H1 (cell line): ENCODE measurements at regions of chr2 and their contacts with region 1.

Region 1: GRCh38 chr2:112884869-112885505 is 26.0 kb upstream of the IL37 start:
- DNase-seq: peak; percentile 46 to 96
- H3K4me3 ChIP-seq: no peak overlapping the region
- H3K27ac ChIP-seq: no peak overlapping the region
- H3K4me1 ChIP-seq: 0 out of 7 replicates have a peak, but pooled peaks cover 0 to 2% (median 0%) of the 10 kb centered on the region in 4 experiments
- H3K27me3 ChIP-seq: no peaks in the 10 kb centered on the region
- CTCF ChIP-seq: peak; percentile 70 to 88 (median 83)
- EP300 ChIP-seq: no peak
- POLR2A ChIP-seq: no peak
- RAD21 ChIP-seq: peak; percentile 94 to 96

Region 2: GRCh38 chr2:112749755-112750559 is 135.0 kb before region 1 on chr2:
- CTCF ChIA-PET with region 1: interaction called, 178 read pairs
- POLR2A ChIA-PET with region 1: interaction called, 5 read pairs
- DNase-seq: peak in 1 of 2 experiments; percentile 86
- H3K4me3 ChIP-seq: no peak overlapping the region
- H3K27ac ChIP-seq: peak overlapping the region; percentile 21; the same call in 1 of the 2 replicates
- H3K4me1 ChIP-seq: no peaks in the 10 kb centered on the region
- H3K27me3 ChIP-seq: no peaks in the 10 kb centered on the region
- CTCF ChIP-seq: peak; percentile 91 to 95 (median 92)
- EP300 ChIP-seq: no peak
- POLR2A ChIP-seq: no peak
- RAD21 ChIP-seq: peak; percentile 88 to 90

Region 3: GRCh38 chr2:112772322-112772721 is 112.7 kb before region 1 on chr2:
- CTCF ChIA-PET with region 1: interaction called, 11 read pairs
- POLR2A ChIA-PET with region 1: no interaction called
- DNase-seq: no peak
- H3K4me3 ChIP-seq: no peak overlapping the region
- H3K27ac ChIP-seq: no peak overlapping the region
- H3K4me1 ChIP-seq: no peaks in the 10 kb centered on the region
- H3K27me3 ChIP-seq: no peaks in the 10 kb centered on the region
- CTCF ChIP-seq: no peak
- EP300 ChIP-seq: no peak
- POLR2A ChIP-seq: no peak
- RAD21 ChIP-seq: no peak

Region 4: DNA sequence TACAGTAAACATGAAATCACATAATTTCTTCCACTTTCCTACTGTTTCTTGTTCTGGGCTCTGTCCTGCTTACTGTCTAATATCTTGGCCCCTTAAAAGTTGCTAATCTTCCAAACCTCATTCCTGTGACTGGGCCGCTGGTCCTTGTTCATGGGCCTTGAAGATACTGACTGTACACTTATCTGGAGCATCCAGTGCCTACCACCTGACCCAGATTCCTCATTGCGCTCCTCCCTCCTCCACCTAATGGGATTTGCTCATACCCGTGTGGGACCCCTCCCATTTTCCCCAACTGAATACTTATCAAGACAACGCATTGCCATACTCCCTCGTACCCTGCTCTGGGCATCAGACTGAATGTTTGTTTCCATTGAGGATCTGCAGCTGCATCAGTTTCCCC is 19.9 kb after region 1 on chr2:
- CTCF ChIA-PET with region 1: interaction called, 40 read pairs
- POLR2A ChIA-PET with region 1: no interaction called
- DNase-seq: no peak
- H3K4me3 ChIP-seq: no peak overlapping the region
- H3K27ac ChIP-seq: no peak overlapping the region
- H3K4me1 ChIP-seq: no peaks in the 10 kb centered on the region
- H3K27me3 ChIP-seq: 0 out of 7 replicates have a peak, but pooled peaks cover 0 to 2% (median 0%) of the 10 kb centered on the region in 4 experiments
- CTCF ChIP-seq: no peak
- EP300 ChIP-seq: no peak
- POLR2A ChIP-seq: no peak
- RAD21 ChIP-seq: no peak